ENCODE measurements at regions of chr3 and their contacts with region 1.

Region 1: GRCh38 chr3:69948246-69948862 is 51.2 kb upstream of the SAMMSON start:
- DNase-seq: peak; percentile 11
- H3K4me3 Mint-ChIP-seq: no peak overlapping the region
- H3K27ac Mint-ChIP-seq: peak overlapping the region; percentile 28
- H3K4me1 Mint-ChIP-seq: peaks cover 7% of the 10 kb centered on the region
- H3K27me3 Mint-ChIP-seq: no peaks in the 10 kb centered on the region
- CTCF ChIP-seq: peak; percentile 35

Region 2: GRCh38 chr3:69691860-69692259 is 256.5 kb before region 1 on chr3:
- CTCF ChIA-PET with region 1: interaction called, 4 read pairs
- intact Hi-C with region 1: loop called (anchors 1 kb)
- DNase-seq: no peak
- H3K4me3 Mint-ChIP-seq: no peak overlapping the region
- H3K27ac Mint-ChIP-seq: no peak overlapping the region
- H3K4me1 Mint-ChIP-seq: no peaks in the 10 kb centered on the region
- H3K27me3 Mint-ChIP-seq: no peaks in the 10 kb centered on the region
- CTCF ChIP-seq: no peak

Region 3: GRCh38 chr3:69791919-69792399 is 156.4 kb before region 1 on chr3:
- CTCF ChIA-PET with region 1: no interaction called
- intact Hi-C with region 1: no loop called
- DNase-seq: no peak
- H3K4me3 Mint-ChIP-seq: no peak overlapping the region
- H3K27ac Mint-ChIP-seq: no peak overlapping the region
- H3K4me1 Mint-ChIP-seq: peaks cover 9% of the 10 kb centered on the region
- H3K27me3 Mint-ChIP-seq: no peaks in the 10 kb centered on the region
- CTCF ChIP-seq: no peak

Region 4: GRCh38 chr3:69803681-69804270 is 144.6 kb before region 1 on chr3:
- CTCF ChIA-PET with region 1: no interaction called
- intact Hi-C with region 1: loop called (anchors 5 kb)
- DNase-seq: no peak
- H3K4me3 Mint-ChIP-seq: no peak overlapping the region
- H3K27ac Mint-ChIP-seq: no peak overlapping the region
- H3K4me1 Mint-ChIP-seq: no peaks in the 10 kb centered on the region
- H3K27me3 Mint-ChIP-seq: no peaks in the 10 kb centered on the region
- CTCF ChIP-seq: no peak

Region 5: GRCh38 chr3:69855436-69856162 is 92.8 kb before region 1 on chr3:
- CTCF ChIA-PET with region 1: no interaction called
- intact Hi-C with region 1: no loop called
- DNase-seq: no peak
- H3K4me3 Mint-ChIP-seq: no peak overlapping the region
- H3K27ac Mint-ChIP-seq: no peak overlapping the region
- H3K4me1 Mint-ChIP-seq: peaks cover 28% of the 10 kb centered on the region
- H3K27me3 Mint-ChIP-seq: no peaks in the 10 kb centered on the region
- CTCF ChIP-seq: no peak

Region 6: GRCh38 chr3:69865920-69866679 is 82.3 kb before region 1 on chr3:
- CTCF ChIA-PET with region 1: no interaction called
- intact Hi-C with region 1: loop called (anchors 5 kb)
- DNase-seq: peak; percentile 69
- H3K4me3 Mint-ChIP-seq: peak overlapping the region; percentile 82
- H3K27ac Mint-ChIP-seq: peak overlapping the region; percentile 95
- H3K4me1 Mint-ChIP-seq: peaks cover 44% of the 10 kb centered on the region
- H3K27me3 Mint-ChIP-seq: no peaks in the 10 kb centered on the region
- CTCF ChIP-seq: no peak

Region 7: GRCh38 chr3:69881051-69881450 is 67.3 kb before region 1 on chr3:
- CTCF ChIA-PET with region 1: no interaction called
- intact Hi-C with region 1: loop called (anchors 5 kb)
- DNase-seq: no peak
- H3K4me3 Mint-ChIP-seq: no peak overlapping the region
- H3K27ac Mint-ChIP-seq: no peak overlapping the region
- H3K4me1 Mint-ChIP-seq: peaks cover 40% of the 10 kb centered on the region
- H3K27me3 Mint-ChIP-seq: no peaks in the 10 kb centered on the region
- CTCF ChIP-seq: no peak